ENCODE measurements at regions of chr17 and their contacts with region 1.

Region 1: DNA sequence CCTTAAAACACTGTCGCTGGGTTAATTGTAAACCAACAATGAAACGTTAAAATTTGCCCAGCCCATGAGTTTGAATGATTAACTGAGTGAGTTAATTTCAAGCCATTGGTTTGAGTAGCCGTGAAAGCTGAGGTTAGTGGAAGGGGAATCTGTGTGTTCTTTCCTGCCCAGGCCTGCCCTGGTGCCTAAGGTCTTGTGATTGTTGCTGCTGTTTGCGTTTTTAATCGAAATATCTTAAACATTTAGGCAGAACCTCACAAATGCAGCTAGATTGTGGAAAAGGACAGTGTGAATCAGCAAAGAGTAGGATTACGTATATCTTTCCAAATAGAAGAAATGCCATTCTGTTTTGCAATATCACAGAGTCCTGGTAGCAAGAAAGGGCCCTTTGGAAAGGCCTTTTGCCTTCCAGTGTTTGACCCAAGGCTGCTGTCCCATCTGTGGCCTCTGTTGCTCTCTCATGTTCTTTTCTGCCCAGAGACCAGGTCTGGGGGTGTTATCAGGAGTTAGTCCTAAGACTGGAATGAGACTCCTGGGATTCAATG is 113.8 kb downstream of the MSI2 start:
- DNase-seq: peak; percentile 94
- ATAC-seq: peak; percentile 83
- H3K4me3 ChIP-seq: peak overlapping the region; percentile 2 to 39 (median 28); a peak in 4 of 6 replicates
- H3K27ac ChIP-seq: peak overlapping the region; percentile 85
- H3K4me1 ChIP-seq: peaks cover 95% of the 10 kb centered on the region
- H3K27me3 ChIP-seq: no peaks in the 10 kb centered on the region
- CTCF ChIP-seq: no peak
- EP300 ChIP-seq: peak in 1 of 2 experiments; percentile 86; a peak in 3 of 4 replicates
- POLR2A ChIP-seq: no peak
- RAD21 ChIP-seq: no peak

Region 2: DNA sequence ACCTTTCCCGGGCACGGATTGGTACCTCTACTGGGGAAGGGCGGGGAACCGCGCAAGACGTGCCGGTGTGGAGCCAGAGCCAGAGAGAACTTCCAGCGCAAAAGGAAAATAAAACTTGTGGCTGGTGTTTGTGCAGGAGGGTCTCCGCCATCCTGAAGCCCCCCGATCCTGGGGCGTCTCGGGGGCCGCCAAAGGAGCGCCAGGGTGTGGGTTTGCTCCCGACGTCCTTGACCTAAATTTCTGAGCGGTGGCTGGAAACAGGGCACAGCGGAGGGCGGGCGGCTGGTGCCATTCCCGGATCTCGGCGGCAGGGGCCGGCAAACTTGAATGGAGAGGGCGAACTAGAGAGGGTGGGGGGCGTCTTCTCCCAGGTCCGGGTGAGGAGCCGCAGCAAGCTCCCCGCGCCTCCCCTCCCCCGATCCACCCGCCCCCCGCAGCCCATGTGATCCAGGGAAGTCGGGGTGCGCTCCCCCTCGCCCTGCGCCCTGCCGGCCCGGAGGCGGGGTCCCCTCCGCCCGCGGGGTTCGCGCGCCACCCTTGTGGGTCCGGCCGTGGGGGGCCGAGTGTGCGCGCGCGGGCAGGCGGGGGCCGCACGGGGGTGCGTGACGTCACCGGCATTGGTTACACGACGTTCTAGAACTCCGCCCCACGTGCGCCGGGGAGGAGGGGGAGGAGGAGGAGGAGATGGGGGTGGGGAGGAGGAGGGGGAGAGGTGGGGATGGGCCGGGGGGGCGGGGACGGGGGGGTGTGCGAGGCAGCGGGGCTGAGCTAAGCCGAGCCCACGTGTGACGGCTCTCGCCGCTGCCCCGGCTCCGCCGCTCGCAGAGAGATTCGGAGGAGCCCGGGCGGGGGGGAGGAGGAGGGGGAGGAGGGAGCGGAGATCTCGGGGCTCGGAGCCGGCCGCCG is 114.1 kb before region 1 on chr17 and contains the start of gene MSI2:
- CTCF ChIA-PET with region 1: no interaction called
- POLR2A ChIA-PET with region 1: interaction called, 12 read pairs
- in situ Hi-C with region 1: no loop called
- intact Hi-C with region 1: no loop called
- DNase-seq: peak; percentile 76
- ATAC-seq: peak; percentile 83
- H3K4me3 ChIP-seq: peak within 1 kb of the TSS; percentile 75 to 95 (median 79)
- H3K27ac ChIP-seq: peak within 1 kb of the TSS; percentile 63
- H3K4me1 ChIP-seq: peaks cover 54% of the 10 kb centered on the region
- H3K27me3 ChIP-seq: no peaks in the 10 kb centered on the region
- CTCF ChIP-seq: no peak
- EP300 ChIP-seq: no peak
- POLR2A ChIP-seq: peak in 1 of 2 experiments; percentile 51; a peak in 2 of 4 replicates
- RAD21 ChIP-seq: no peak
- total RNA-seq, gene MSI2: 68.1 and 78.4 TPM in 2 replicates

Region 3: DNA sequence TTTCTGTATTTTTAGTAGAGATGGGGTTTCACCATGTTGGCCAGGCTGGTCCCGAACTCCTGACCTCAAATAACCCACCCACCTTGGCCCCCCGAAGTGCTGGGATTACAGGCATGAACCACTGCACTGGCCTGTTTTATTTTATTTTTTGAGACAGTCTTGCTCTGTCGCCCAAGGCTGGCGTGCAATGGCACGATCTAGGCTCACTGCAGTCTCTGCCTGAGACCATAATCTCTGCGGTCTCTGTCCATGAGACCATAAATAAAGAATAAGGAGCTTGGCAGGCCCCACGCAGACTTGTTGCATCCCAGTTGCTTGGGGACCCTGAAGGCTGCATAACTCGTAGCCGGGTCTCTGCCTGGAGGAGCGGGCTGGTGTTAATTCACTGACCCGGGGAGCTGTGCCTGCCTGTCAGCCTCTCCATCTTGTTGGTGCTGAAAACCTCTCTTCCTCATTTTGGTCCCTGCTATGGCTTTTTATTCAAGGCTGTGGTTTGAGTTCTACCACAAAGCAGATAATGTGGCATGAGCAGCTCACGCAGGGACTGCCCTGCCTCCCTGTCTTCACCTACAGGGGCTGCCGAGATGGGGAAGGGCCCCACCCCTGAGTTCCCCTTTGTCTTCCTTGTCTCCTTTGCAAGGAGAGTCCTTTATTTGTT is 31.7 kb before region 1 on chr17:
- CTCF ChIA-PET with region 1: no interaction called
- POLR2A ChIA-PET with region 1: no interaction called
- in situ Hi-C with region 1: no loop called
- intact Hi-C with region 1: loop called (anchors 5 kb)
- DNase-seq: no peak
- ATAC-seq: no peak
- H3K4me3 ChIP-seq: no peak overlapping the region
- H3K27ac ChIP-seq: no peak overlapping the region
- H3K4me1 ChIP-seq: peaks cover 22% of the 10 kb centered on the region
- H3K27me3 ChIP-seq: no peaks in the 10 kb centered on the region
- CTCF ChIP-seq: no peak
- EP300 ChIP-seq: no peak
- POLR2A ChIP-seq: no peak
- RAD21 ChIP-seq: no peak

Region 4: GRCh38 chr17:57440522-57441485 is 70.7 kb after region 1 on chr17:
- CTCF ChIA-PET with region 1: no interaction called
- POLR2A ChIA-PET with region 1: interaction called, 4 read pairs
- in situ Hi-C with region 1: no loop called
- intact Hi-C with region 1: loop called (anchors 5 kb)
- DNase-seq: peak; percentile 91
- ATAC-seq: peak; percentile 84
- H3K4me3 ChIP-seq: peak overlapping the region in 2 of 3 experiments; percentile 17 to 54; a peak in 3 of 6 replicates
- H3K27ac ChIP-seq: peak overlapping the region; percentile 64
- H3K4me1 ChIP-seq: peaks cover 84% of the 10 kb centered on the region
- H3K27me3 ChIP-seq: no peaks in the 10 kb centered on the region
- CTCF ChIP-seq: peak; percentile 88
- EP300 ChIP-seq: no peak
- POLR2A ChIP-seq: no peak
- RAD21 ChIP-seq: peak; percentile 89

Region 5: GRCh38 chr17:57455063-57455914 is 85.2 kb after region 1 on chr17:
- CTCF ChIA-PET with region 1: no interaction called
- POLR2A ChIA-PET with region 1: no interaction called
- in situ Hi-C with region 1: no loop called
- intact Hi-C with region 1: loop called (anchors 5 kb)
- DNase-seq: no peak
- ATAC-seq: no peak
- H3K4me3 ChIP-seq: no peak overlapping the region
- H3K27ac ChIP-seq: no peak overlapping the region
- H3K4me1 ChIP-seq: peaks cover 22% of the 10 kb centered on the region
- H3K27me3 ChIP-seq: no peaks in the 10 kb centered on the region
- CTCF ChIP-seq: no peak
- EP300 ChIP-seq: no peak
- POLR2A ChIP-seq: no peak
- RAD21 ChIP-seq: no peak